ENCODE measurements at regions of chr20 and their contacts with region 1.

Region 1: DNA sequence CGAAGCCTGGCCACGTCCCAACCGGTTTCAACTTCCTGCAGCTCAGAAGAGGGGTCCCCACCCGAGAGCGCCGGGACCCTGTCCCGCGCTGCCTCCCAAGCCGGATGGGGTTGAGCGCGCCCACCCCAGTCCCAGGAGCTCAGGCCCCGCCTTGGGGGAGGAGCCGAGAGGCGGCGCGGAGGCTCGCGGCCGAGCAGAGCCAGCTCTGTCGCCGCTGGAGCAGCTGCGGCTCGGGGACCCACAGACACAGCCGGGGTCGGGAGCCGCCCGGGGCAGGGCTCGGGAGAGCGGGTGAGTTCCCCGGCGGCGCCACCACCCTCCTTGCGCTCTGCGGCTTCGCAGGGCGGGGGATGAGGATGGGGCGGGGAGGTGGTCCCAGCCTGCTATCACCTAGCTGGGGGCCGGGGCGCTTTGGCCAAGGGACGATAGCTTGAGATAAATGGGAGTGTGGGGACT is at the start of gene PPP1R16B:
- DNase-seq: peak; percentile 90
- H3K4me3 ChIP-seq: peak within 1 kb of the TSS; percentile 98
- H3K27ac ChIP-seq: peak within 1 kb of the TSS; percentile 79
- H3K4me1 ChIP-seq: peaks cover 51% of the 10 kb centered on the region
- CTCF ChIP-seq: no peak
- total RNA-seq, gene PPP1R16B: 44.3 and 49.7 TPM in 2 replicates

Region 2: DNA sequence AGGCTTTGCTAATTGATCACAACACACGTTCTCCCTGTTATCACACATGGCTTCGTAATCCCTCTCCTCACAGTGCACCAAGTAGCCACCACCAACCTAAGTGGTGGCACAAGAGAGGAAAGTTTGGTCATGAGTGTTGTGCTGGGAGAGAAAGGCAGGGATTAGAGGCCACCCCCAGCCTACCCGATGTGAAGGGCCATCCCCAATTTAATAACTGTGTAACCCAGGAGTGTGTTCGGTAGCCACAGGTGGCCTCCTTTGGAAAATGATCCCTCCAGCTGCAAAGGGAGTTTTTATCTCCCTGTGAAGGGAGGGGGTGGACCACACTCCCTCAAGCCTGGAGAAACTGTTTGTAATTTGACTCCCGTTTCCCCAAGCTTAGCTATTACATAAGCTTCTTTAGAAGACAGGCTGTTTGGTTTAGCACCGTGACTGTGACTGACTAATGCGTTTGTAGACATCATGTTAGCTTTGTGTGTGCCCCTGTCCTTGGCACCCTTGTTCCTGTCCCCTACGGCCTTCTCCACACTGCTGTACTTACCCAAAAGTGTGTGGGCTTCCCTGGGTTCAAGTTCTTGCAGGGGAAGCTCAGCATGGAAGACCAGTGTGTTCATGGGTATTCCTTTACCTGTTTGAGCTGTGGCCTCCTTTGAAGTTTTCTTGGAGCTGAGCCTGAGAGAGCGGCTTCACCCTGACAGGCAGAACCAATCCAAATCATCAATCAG is 20.5 kb after region 1 on chr20:
- CTCF ChIA-PET with region 1: interaction called, 3 read pairs
- POLR2A ChIA-PET with region 1: interaction called, 10 read pairs
- intact Hi-C with region 1: no loop called
- DNase-seq: no peak
- H3K4me3 ChIP-seq: no peak overlapping the region
- H3K27ac ChIP-seq: no peak overlapping the region
- H3K4me1 ChIP-seq: peaks cover 13% of the 10 kb centered on the region
- CTCF ChIP-seq: no peak

Region 3: GRCh38 chr20:38863024-38863851 is 57.7 kb after region 1 on chr20:
- CTCF ChIA-PET with region 1: interaction called, 4 read pairs
- POLR2A ChIA-PET with region 1: interaction called, 6 read pairs
- intact Hi-C with region 1: loop called (anchors 1 kb)
- DNase-seq: peak; percentile 87
- H3K4me3 ChIP-seq: peak overlapping the region; percentile 27
- H3K27ac ChIP-seq: peak overlapping the region; percentile 86
- H3K4me1 ChIP-seq: peaks cover 95% of the 10 kb centered on the region
- CTCF ChIP-seq: no peak

Region 4: DNA sequence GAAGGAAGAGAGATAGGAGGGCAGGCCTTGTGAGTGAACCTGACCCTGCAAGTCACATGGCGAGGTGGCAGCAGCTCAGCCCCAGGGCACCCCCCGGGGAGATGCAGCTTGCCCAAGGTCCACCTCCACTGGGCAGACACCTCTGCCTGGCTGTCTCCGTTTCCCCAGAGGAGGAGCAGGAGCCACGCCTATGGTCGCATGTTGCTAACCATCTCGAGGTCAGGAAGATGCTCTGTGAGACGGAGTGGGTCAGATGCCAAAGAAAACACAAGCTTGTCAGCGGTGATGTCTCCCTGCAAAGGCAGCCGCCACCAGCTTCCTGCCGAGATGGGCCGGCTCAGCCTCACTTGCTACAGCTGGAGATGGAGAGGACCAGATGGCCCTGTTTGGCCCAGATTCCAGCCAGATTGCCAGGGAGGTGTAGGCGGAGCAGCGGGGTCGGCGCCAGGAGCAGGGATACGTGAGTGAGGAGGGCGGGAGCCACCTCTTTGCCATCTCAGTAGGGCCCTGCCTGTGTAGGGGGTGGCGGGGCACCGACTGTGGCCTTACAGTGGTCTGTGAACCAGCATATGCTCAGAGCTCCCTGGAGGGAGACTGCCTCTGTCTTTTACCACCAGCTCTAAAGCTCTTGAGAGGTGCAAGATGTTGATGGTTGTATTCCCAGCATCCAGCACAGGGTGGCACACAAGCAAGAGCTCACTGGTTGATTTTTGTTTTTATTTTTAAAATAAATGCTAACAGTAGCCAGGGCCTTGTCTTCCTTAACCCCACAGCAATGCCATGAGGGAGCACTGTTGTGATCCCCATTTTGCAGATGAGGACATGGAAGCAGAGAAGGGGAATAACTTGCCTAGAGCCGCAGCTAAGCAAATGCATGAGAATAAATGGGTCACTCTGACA is 77.8 kb after region 1 on chr20:
- CTCF ChIA-PET with region 1: interaction called, 4 read pairs
- POLR2A ChIA-PET with region 1: interaction called, 18 read pairs
- intact Hi-C with region 1: no loop called
- DNase-seq: peak; percentile 63
- H3K4me3 ChIP-seq: peak overlapping the region; percentile 36
- H3K27ac ChIP-seq: peak overlapping the region; percentile 97
- H3K4me1 ChIP-seq: peaks cover 81% of the 10 kb centered on the region
- CTCF ChIP-seq: peak; percentile 63

Region 5: GRCh38 chr20:39049684-39050554 is 244.4 kb after region 1 on chr20:
- CTCF ChIA-PET with region 1: no interaction called
- POLR2A ChIA-PET with region 1: no interaction called
- intact Hi-C with region 1: loop called (anchors 10 kb)
- DNase-seq: peak; percentile 82
- H3K4me3 ChIP-seq: peak overlapping the region; percentile 64
- H3K27ac ChIP-seq: no peak overlapping the region
- H3K4me1 ChIP-seq: peaks cover 11% of the 10 kb centered on the region
- CTCF ChIP-seq: peak; percentile 93

Region 6: GRCh38 chr20:39103732-39104131 is 298.2 kb after region 1 on chr20:
- CTCF ChIA-PET with region 1: no interaction called
- POLR2A ChIA-PET with region 1: no interaction called
- intact Hi-C with region 1: no loop called
- DNase-seq: no peak
- H3K4me3 ChIP-seq: no peak overlapping the region
- H3K27ac ChIP-seq: no peak overlapping the region
- H3K4me1 ChIP-seq: no peaks in the 10 kb centered on the region
- CTCF ChIP-seq: no peak